Sigmoid colon (tissue), 7 donors: ENCODE measurements at regions of chr3 and their contacts with region 1.

Region 1: DNA sequence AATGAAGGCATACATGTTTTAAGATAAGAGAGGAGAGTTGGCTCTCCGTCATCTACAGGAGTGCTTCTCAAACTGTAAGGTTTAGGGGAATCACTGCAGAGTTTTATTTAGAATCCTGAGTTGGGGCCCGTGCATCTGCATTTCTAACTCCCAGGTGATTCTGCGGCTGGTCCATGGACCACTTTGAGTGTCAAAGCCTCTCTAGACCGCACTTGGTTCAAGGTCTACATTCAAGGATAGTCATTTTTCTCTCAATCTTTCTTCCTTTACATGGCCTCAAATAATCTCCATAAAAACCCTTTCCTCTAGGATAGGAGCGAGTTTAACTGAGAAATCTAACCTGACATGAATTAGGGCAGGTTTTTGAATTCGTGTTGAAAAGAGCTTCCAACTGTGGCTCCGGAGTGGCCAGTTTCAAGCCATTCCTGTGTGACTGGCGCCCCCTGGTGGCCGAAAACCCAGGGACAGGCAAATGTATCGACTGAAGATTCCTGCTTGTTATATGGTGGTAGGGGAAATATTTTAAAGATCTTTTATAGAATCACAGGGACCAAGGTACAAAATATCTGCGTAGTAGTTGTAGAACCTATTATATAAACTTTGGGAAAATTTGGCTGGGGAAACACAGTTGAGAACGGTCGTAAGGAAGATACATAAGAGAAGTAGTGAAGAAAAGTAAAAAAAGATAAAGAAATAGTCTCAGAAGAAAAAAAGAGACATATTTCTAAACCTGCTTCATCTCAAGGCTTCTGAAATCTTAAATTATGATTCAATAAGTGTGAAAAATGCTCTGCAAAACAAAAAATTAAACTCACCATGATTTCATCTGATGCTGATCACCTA is 11.9 kb downstream of the GABRR3 start:
- DNase-seq: peak; percentile 92
- H3K4me3 ChIP-seq: no peak overlapping the region
- H3K27ac ChIP-seq: no peak overlapping the region
- H3K4me1 ChIP-seq: peaks cover 0 to 21% (median 11%) of the 10 kb centered on the region in 4 donors
- H3K27me3 ChIP-seq: peaks cover 0 to 3% (median 0%) of the 10 kb centered on the region in 3 donors
- CTCF ChIP-seq: peak; percentile 78 to 94 (median 92)
- EP300 ChIP-seq: no peak
- POLR2A ChIP-seq: no peak

Region 2: DNA sequence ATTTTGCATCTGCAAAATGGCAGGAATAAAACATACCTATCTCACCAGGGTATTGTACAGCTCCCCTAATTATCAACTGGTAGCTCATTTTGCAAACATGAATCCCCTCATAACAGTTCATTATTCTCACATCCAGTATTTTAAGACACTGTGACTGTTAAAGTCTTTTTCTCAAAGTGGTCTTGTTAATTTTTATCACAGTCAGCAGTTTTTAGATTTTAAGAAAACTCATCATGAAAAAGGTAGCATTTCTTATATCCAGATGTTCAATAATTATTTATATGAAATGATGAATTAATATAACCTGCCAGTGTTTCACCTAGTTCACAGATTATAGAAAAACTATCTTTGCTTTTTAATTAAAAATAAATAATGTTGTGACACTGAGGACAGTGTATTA is 613.6 kb before region 1 on chr3:
- intact Hi-C with region 1: no loop called
- DNase-seq: no peak
- H3K4me3 ChIP-seq: no peak overlapping the region
- H3K27ac ChIP-seq: no peak overlapping the region
- H3K4me1 ChIP-seq: no peaks in the 10 kb centered on the region
- H3K27me3 ChIP-seq: no peaks in the 10 kb centered on the region
- CTCF ChIP-seq: no peak
- EP300 ChIP-seq: no peak
- POLR2A ChIP-seq: no peak

Region 3: DNA sequence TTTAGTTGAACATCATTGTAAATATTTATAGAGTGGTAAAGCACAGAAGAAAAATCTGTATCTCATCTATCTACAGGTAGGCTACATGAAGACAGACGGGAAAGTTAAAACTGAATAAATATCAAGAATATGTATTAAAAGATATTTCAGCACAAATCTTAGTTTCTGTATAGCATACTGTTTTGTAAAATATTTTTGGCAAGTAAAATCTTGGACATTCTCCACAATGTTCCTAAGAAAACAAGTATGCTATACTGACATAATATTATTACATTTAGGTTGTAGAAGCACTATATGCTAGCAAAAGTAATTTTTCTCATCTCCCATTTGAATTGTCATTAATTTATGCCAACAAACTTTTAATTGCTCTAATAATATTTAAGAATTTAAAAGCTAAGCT is 585.1 kb before region 1 on chr3:
- intact Hi-C with region 1: no loop called
- DNase-seq: no peak
- H3K4me3 ChIP-seq: no peak overlapping the region
- H3K27ac ChIP-seq: no peak overlapping the region
- H3K4me1 ChIP-seq: no peaks in the 10 kb centered on the region
- H3K27me3 ChIP-seq: no peaks in the 10 kb centered on the region
- CTCF ChIP-seq: no peak
- EP300 ChIP-seq: no peak
- POLR2A ChIP-seq: no peak

Region 4: DNA sequence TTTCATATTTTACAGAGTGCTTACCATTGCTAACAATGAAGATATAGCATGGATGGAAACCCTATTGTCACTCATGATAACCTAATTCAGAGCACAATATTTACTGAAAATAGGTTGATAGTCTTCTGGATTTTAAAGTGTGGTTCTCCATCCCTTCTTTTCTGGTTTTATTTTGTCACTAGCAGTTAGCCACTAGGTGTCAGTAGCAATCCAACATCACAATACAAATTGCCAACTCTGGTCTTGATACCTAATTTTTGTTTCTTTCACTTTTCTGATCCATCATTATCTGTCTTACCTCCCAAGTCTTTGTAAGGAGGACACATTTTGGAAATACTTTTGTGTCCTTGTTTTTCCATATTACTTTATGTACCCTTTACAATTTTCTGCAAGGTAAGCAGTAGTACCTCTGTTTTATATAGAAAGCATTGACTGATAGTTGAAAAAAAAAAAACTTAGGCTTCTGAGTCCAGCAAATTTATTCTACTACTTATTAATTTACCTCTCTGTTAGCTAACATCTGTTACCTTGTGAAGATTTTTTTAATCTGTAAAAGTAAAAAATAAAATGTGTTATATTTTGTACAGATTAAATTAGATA is 229.7 kb before region 1 on chr3:
- intact Hi-C with region 1: loop called (anchors 1 kb)
- DNase-seq: no peak
- H3K4me3 ChIP-seq: no peak overlapping the region
- H3K27ac ChIP-seq: no peak overlapping the region
- H3K4me1 ChIP-seq: no peaks in the 10 kb centered on the region
- H3K27me3 ChIP-seq: no peaks in the 10 kb centered on the region
- CTCF ChIP-seq: peak; percentile 61 to 78 (median 70)
- EP300 ChIP-seq: no peak
- POLR2A ChIP-seq: no peak

Region 5: DNA sequence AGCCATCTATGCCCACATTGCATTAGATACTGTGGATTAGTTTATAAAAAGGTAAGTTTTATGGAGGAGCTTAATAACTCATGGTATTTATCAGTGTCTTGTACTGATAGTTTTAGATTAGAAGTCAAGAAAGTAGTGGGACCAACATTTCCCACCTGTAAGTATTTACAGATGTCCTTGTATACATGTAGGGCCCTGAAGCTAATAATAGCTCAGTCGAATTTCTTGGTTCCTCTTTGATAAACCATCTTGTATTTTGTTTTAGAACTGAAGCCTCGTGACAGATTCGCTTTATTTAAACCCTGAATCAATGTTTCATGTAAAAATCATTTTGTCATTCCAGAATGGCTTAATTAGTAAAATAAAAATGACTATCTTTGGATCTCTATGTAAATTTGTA is 128.0 kb before region 1 on chr3:
- intact Hi-C with region 1: loop called (anchors 10 kb)
- DNase-seq: no peak
- H3K4me3 ChIP-seq: no peak overlapping the region
- H3K27ac ChIP-seq: no peak overlapping the region
- H3K4me1 ChIP-seq: no peaks in the 10 kb centered on the region
- H3K27me3 ChIP-seq: no peaks in the 10 kb centered on the region
- CTCF ChIP-seq: no peak
- EP300 ChIP-seq: no peak
- POLR2A ChIP-seq: no peak

Region 6: GRCh38 chr3:97957617-97958311 is 65.4 kb before region 1 on chr3:
- intact Hi-C with region 1: loop called (anchors 5 kb)
- DNase-seq: peak; percentile 83
- H3K4me3 ChIP-seq: no peak overlapping the region
- H3K27ac ChIP-seq: peak overlapping the region in 2 of 4 donors; percentile 42 to 52
- H3K4me1 ChIP-seq: peaks cover 0 to 14% (median 13%) of the 10 kb centered on the region in 4 donors
- H3K27me3 ChIP-seq: no peaks in the 10 kb centered on the region
- CTCF ChIP-seq: no peak
- EP300 ChIP-seq: no peak
- POLR2A ChIP-seq: no peak